ENCODE measurements at regions of chr9 and their contacts with region 1.

Region 1: GRCh38 chr9:4762108-4762885 is 21.3 kb upstream of the AK3 start:
- DNase-seq: peak; percentile 71
- H3K4me3 Mint-ChIP-seq: peak overlapping the region; percentile 52
- H3K27ac Mint-ChIP-seq: no peak overlapping the region
- H3K4me1 Mint-ChIP-seq: no peaks in the 10 kb centered on the region
- H3K27me3 Mint-ChIP-seq: no peaks in the 10 kb centered on the region
- CTCF ChIP-seq: peak; percentile 53

Region 2: GRCh38 chr9:4832786-4833579 is 70.7 kb after region 1 on chr9:
- CTCF ChIA-PET with region 1: interaction called, 5 read pairs
- intact Hi-C with region 1: loop called (anchors 10 kb)
- DNase-seq: peak; percentile 10
- H3K4me3 Mint-ChIP-seq: no peak overlapping the region
- H3K27ac Mint-ChIP-seq: peak overlapping the region; percentile 85
- H3K4me1 Mint-ChIP-seq: peaks cover 23% of the 10 kb centered on the region
- H3K27me3 Mint-ChIP-seq: no peaks in the 10 kb centered on the region
- CTCF ChIP-seq: no peak

Region 3: GRCh38 chr9:4923580-4924544 is 161.6 kb after region 1 on chr9:
- CTCF ChIA-PET with region 1: interaction called, 3 read pairs
- intact Hi-C with region 1: loop called (anchors 1 kb)
- DNase-seq: peak; percentile 3
- H3K4me3 Mint-ChIP-seq: no peak overlapping the region
- H3K27ac Mint-ChIP-seq: no peak overlapping the region
- H3K4me1 Mint-ChIP-seq: peaks cover 8% of the 10 kb centered on the region
- H3K27me3 Mint-ChIP-seq: no peaks in the 10 kb centered on the region
- CTCF ChIP-seq: no peak

Region 4: DNA sequence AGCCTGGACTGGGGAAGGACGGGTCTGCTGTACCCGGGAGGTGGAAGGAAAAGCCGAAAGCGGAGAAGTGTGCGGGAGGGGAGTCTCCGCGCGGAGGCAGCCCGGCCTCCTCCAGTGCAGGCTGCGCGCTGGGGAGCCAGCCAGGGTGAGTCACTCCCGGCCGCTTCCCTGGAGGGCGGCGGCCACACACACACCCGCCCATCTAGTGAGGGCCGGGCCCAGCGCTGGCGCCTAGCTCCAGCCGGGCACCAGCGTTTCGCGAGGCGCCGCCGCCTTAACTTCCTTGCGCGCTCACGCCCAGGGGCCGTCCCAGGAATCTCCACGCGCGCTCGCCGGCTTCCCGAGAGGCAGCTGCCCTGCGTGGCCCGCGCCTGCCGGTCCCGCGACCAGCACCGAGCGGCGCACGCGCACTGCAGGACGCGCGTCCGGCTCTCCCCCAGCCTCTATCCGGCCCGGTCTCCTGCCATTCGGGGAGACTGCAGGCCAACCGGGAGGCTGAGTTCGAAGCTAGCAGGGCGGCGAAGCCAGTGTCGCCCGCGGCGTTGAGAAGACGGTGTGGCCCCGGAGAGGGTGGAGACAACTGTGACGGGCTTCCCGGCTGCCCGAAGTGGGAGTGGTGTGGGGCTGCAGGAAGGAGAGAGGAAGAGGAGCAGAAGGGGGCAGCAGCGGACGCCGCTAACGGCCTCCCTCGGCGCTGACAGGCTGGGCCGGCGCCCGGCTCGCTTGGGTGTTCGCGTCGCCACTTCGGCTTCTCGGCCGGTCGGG is 222.5 kb after region 1 on chr9 and contains the start of gene JAK2:
- CTCF ChIA-PET with region 1: interaction called, 7 read pairs
- intact Hi-C with region 1: loop called (anchors 2 kb)
- DNase-seq: peak; percentile 89
- H3K4me3 Mint-ChIP-seq: peak within 1 kb of the TSS; percentile 96
- H3K27ac Mint-ChIP-seq: peak within 1 kb of the TSS; percentile 95
- H3K4me1 Mint-ChIP-seq: peaks cover 28% of the 10 kb centered on the region
- H3K27me3 Mint-ChIP-seq: no peaks in the 10 kb centered on the region
- CTCF ChIP-seq: peak; percentile 24
- total RNA-seq, gene JAK2: 6.3 and 9.2 TPM in 2 replicates

Measured in Calu3 (cell line).